Activated CD8-positive, alpha-beta T cell treated with anti-CD3 and anti-CD28 coated beads for 36 hours (primary cell): ENCODE measurements at regions of chr11 and their contacts with region 1.

Region 1: GRCh38 chr11:18768472-18768901 is 23.1 kb downstream of the PTPN5 start:
- DNase-seq: peak; percentile 58
- ATAC-seq: peak; percentile 76
- H3K4me3 Mint-ChIP-seq: no peak overlapping the region
- H3K27ac Mint-ChIP-seq: no peak overlapping the region
- H3K4me1 Mint-ChIP-seq: peaks cover 28% of the 10 kb centered on the region
- H3K27me3 Mint-ChIP-seq: peaks cover 12% of the 10 kb centered on the region
- CTCF ChIP-seq: no peak

Region 2: GRCh38 chr11:18600915-18601569 is 167.4 kb before region 1 on chr11:
- CTCF ChIA-PET with region 1: no interaction called
- POLR2A ChIA-PET with region 1: no interaction called
- intact Hi-C with region 1: no loop called
- DNase-seq: no peak
- ATAC-seq: no peak
- H3K4me3 Mint-ChIP-seq: no peak overlapping the region
- H3K27ac Mint-ChIP-seq: no peak overlapping the region
- H3K4me1 Mint-ChIP-seq: no peaks in the 10 kb centered on the region
- H3K27me3 Mint-ChIP-seq: no peaks in the 10 kb centered on the region
- CTCF ChIP-seq: no peak

Region 3: GRCh38 chr11:18731949-18732821 is 36.3 kb before region 1 on chr11:
- CTCF ChIA-PET with region 1: interaction called, 19 read pairs
- POLR2A ChIA-PET with region 1: interaction called, 3 read pairs
- intact Hi-C with region 1: no loop called
- DNase-seq: peak; percentile 82
- ATAC-seq: peak; percentile 84
- H3K4me3 Mint-ChIP-seq: no peak overlapping the region
- H3K27ac Mint-ChIP-seq: no peak overlapping the region
- H3K4me1 Mint-ChIP-seq: peaks cover 5% of the 10 kb centered on the region
- H3K27me3 Mint-ChIP-seq: no peaks in the 10 kb centered on the region
- CTCF ChIP-seq: peak; percentile 95

Region 4: GRCh38 chr11:18741783-18742182 is 26.7 kb before region 1 on chr11:
- CTCF ChIA-PET with region 1: interaction called, 26 read pairs
- POLR2A ChIA-PET with region 1: interaction called, 4 read pairs
- intact Hi-C with region 1: no loop called
- DNase-seq: no peak
- ATAC-seq: no peak
- H3K4me3 Mint-ChIP-seq: no peak overlapping the region
- H3K27ac Mint-ChIP-seq: no peak overlapping the region
- H3K4me1 Mint-ChIP-seq: no peaks in the 10 kb centered on the region
- H3K27me3 Mint-ChIP-seq: no peaks in the 10 kb centered on the region
- CTCF ChIP-seq: no peak